Pancreas (tissue), 10 donors: ENCODE measurements at regions of chr6 and their contacts with region 1.

Region 1: DNA sequence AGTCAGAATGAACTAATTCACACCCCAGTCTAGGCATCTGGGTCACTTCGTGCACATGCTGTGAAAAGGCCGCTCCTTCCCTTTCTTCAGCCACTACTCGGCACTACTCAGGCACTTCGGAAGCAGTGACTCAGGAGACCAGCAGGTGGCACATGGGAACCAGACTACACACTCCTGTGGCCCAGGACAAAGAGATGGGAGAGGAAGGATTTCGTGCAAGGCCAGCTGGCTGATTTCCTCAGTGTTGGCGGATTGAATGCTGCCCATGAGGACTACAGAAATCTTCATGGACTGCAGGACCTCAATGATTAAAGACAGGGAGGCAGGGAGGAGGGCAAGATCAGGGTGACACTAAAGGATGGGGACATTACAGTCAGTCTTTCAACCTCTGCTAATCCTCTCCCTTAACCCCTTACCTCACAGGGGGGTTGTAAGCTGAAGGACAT is 117.8 kb upstream of the SPACA1 start:
- DNase-seq: peak; percentile 56 to 84 (median 68)
- ATAC-seq: peak; percentile 93 to 100 (median 100)
- H3K4me3 ChIP-seq: no peak overlapping the region
- H3K27ac ChIP-seq: no peak overlapping the region
- H3K4me1 ChIP-seq: no peaks in the 10 kb centered on the region
- H3K27me3 ChIP-seq: no peaks in the 10 kb centered on the region
- CTCF ChIP-seq: peak; percentile 56 to 73 (median 65)

Region 2: DNA sequence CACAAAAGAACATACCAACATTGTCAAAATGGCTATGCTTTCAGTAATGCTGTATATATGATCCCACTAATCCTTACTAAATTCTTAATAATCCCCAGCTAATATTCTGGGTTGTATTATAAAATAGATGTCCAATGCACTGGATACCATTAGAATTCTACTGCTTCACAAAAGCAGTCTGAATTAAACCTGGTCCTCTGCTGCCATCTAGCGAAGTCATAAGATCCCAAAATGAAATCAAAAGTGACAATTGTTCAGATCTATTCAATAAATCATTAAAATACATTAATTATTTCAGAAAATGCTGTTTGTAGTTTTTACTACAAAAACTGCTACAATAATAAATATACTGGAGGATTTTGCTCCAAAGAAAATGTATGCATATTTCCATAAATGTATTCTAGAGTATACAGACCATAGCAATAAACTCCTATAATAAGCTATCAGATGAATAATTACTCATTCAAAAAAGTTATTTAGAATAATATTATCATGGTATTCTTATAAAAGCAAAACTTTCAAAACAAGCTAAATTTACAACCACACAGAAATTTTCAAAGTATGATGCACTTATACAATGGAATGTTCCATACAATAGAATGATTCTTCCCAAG is 941.0 kb after region 1 on chr6:
- intact Hi-C with region 1: loop called in 2 of 3 experiments (anchors 5 to 10 kb)
- DNase-seq: peak in 2 of 6 donors; percentile 15 to 32
- ATAC-seq: peak; percentile 50 to 77 (median 74)
- H3K4me3 ChIP-seq: no peak overlapping the region
- H3K27ac ChIP-seq: no peak overlapping the region
- H3K4me1 ChIP-seq: peaks cover 0 to 6% (median 5%) of the 10 kb centered on the region in 3 donors
- H3K27me3 ChIP-seq: no peaks in the 10 kb centered on the region
- CTCF ChIP-seq: peak in 2 of 4 donors; percentile 34 to 47

Region 3: DNA sequence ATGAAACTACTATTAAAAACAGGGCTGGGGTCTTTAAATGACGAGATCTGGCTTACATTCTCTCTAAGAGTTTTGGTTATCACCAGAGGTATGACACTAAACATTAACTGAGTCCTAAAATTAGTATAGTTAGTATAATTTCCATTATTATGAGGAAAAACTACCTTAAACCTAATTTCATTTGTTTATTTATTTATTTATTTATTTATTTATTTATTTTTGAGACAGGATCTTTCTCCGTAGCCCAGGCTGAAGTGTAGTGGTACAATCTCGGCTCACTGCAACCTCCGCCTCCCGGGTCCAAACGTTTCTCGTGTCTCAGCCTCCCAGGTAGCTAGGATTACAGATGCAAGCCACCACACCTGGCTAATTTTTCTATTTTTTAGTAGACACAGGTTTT is 948.0 kb after region 1 on chr6:
- intact Hi-C with region 1: loop called in 2 of 3 experiments (anchors 5 to 10 kb)
- DNase-seq: no peak
- ATAC-seq: no peak
- H3K4me3 ChIP-seq: no peak overlapping the region
- H3K27ac ChIP-seq: no peak overlapping the region
- H3K4me1 ChIP-seq: peaks cover 0 to 22% (median 5%) of the 10 kb centered on the region in 3 donors
- H3K27me3 ChIP-seq: no peaks in the 10 kb centered on the region
- CTCF ChIP-seq: no peak